CD4-positive, alpha-beta T cell (primary cell): ENCODE measurements at regions of chr15 and their contacts with region 1.

Region 1: DNA sequence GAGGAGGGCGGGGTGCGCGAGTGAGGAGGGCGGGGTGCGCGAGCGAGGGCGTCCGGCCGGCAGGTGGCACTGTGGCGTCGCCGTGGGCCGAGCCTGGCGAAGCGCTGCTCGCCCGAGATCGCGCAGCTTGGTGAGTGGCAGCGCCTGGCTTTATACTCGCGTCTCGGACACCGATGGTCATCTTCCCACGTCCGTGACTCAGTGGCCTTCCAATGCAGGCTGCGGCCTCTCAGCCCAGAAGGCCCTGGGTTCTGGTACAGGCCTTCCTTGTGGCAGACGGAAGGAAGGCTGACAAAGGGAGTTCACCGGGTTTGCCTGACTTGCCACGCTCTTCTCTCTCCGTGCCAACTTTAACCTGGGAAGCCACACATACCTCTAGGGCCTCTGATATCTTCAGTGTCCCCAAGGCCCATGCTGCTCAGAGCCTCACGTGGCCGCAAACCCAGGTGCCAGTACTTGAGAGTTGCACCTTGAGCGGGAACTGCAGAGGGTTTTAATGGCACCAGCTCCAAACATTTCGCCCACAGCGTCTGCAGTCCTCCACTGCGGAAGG is 195.3 kb upstream of the LYSMD4 start:
- DNase-seq: peak; percentile 76 to 95 (median 88)
- ATAC-seq: peak; percentile 85
- H3K4me3 ChIP-seq: peak overlapping the region; percentile 75
- H3K4me3 Mint-ChIP-seq: peak overlapping the region; percentile 93
- H3K27ac ChIP-seq: peak overlapping the region; percentile 56 to 58
- H3K27ac Mint-ChIP-seq: peak overlapping the region; percentile 89
- H3K4me1 ChIP-seq: peaks cover 21% of the 10 kb centered on the region
- H3K4me1 Mint-ChIP-seq: peaks cover 24% of the 10 kb centered on the region
- H3K27me3 ChIP-seq: no peaks in the 10 kb centered on the region
- H3K27me3 Mint-ChIP-seq: peaks cover 5% of the 10 kb centered on the region
- CTCF ChIP-seq: peak; percentile 65

Region 2: GRCh38 chr15:98658831-98659699 is 1269.4 kb before region 1 on chr15:
- CTCF ChIA-PET with region 1: no interaction called
- POLR2A ChIA-PET with region 1: no interaction called
- intact Hi-C with region 1: loop called in 1 of 2 experiments (anchors 10 kb)
- DNase-seq: peak in 7 of 14 experiments; percentile 10 to 73 (median 52)
- ATAC-seq: peak; percentile 81
- H3K4me3 ChIP-seq: no peak overlapping the region
- H3K4me3 Mint-ChIP-seq: no peak overlapping the region
- H3K27ac ChIP-seq: no peak overlapping the region
- H3K27ac Mint-ChIP-seq: no peak overlapping the region
- H3K4me1 ChIP-seq: peaks cover 9% of the 10 kb centered on the region
- H3K4me1 Mint-ChIP-seq: peaks cover 56% of the 10 kb centered on the region
- H3K27me3 ChIP-seq: no peaks in the 10 kb centered on the region
- H3K27me3 Mint-ChIP-seq: no peaks in the 10 kb centered on the region
- CTCF ChIP-seq: peak; percentile 95

Region 3: GRCh38 chr15:99961011-99961441 is 32.5 kb after region 1 on chr15:
- CTCF ChIA-PET with region 1: no interaction called
- POLR2A ChIA-PET with region 1: no interaction called
- intact Hi-C with region 1: no loop called
- DNase-seq: peak in 2 of 14 experiments; percentile 9 to 17
- ATAC-seq: no peak
- H3K4me3 ChIP-seq: no peak overlapping the region
- H3K4me3 Mint-ChIP-seq: no peak overlapping the region
- H3K27ac ChIP-seq: no peak overlapping the region
- H3K27ac Mint-ChIP-seq: no peak overlapping the region
- H3K4me1 ChIP-seq: peaks cover 5% of the 10 kb centered on the region
- H3K4me1 Mint-ChIP-seq: peaks cover 11% of the 10 kb centered on the region
- H3K27me3 ChIP-seq: no peaks in the 10 kb centered on the region
- H3K27me3 Mint-ChIP-seq: peaks cover 13% of the 10 kb centered on the region
- CTCF ChIP-seq: no peak

Region 4: GRCh38 chr15:99994849-99995248 is 66.3 kb after region 1 on chr15:
- CTCF ChIA-PET with region 1: no interaction called
- POLR2A ChIA-PET with region 1: no interaction called
- intact Hi-C with region 1: no loop called
- DNase-seq: peak in 1 of 14 experiments; percentile 12
- ATAC-seq: no peak
- H3K4me3 ChIP-seq: no peak overlapping the region
- H3K4me3 Mint-ChIP-seq: no peak overlapping the region
- H3K27ac ChIP-seq: no peak overlapping the region
- H3K27ac Mint-ChIP-seq: no peak overlapping the region
- H3K4me1 ChIP-seq: no peaks in the 10 kb centered on the region
- H3K4me1 Mint-ChIP-seq: no peaks in the 10 kb centered on the region
- H3K27me3 ChIP-seq: no peaks in the 10 kb centered on the region
- H3K27me3 Mint-ChIP-seq: no peaks in the 10 kb centered on the region
- CTCF ChIP-seq: no peak

Region 5: GRCh38 chr15:100131321-100132224 is 203.1 kb after region 1 on chr15:
- CTCF ChIA-PET with region 1: interaction called, 5 read pairs
- POLR2A ChIA-PET with region 1: no interaction called
- intact Hi-C with region 1: loop called in 1 of 2 experiments (anchors 5 kb)
- DNase-seq: peak in 7 of 14 experiments; percentile 3 to 43 (median 9)
- ATAC-seq: no peak
- H3K4me3 ChIP-seq: peak overlapping the region; percentile 19
- H3K4me3 Mint-ChIP-seq: peak overlapping the region; percentile 51
- H3K27ac ChIP-seq: no peak overlapping the region
- H3K27ac Mint-ChIP-seq: no peak overlapping the region
- H3K4me1 ChIP-seq: no peaks in the 10 kb centered on the region
- H3K4me1 Mint-ChIP-seq: no peaks in the 10 kb centered on the region
- H3K27me3 ChIP-seq: no peaks in the 10 kb centered on the region
- H3K27me3 Mint-ChIP-seq: no peaks in the 10 kb centered on the region
- CTCF ChIP-seq: peak; percentile 27

Region 6: GRCh38 chr15:100572362-100572983 is 644.0 kb after region 1 on chr15:
- CTCF ChIA-PET with region 1: interaction called, 7 read pairs
- POLR2A ChIA-PET with region 1: no interaction called
- intact Hi-C with region 1: loop called (anchors 2 to 5 kb)
- DNase-seq: peak in 3 of 14 experiments; percentile 41 to 58 (median 53)
- ATAC-seq: peak; percentile 68
- H3K4me3 ChIP-seq: peak overlapping the region; percentile 12
- H3K4me3 Mint-ChIP-seq: peak overlapping the region; percentile 22
- H3K27ac ChIP-seq: peak overlapping the region in 1 of 2 donors; percentile 18
- H3K27ac Mint-ChIP-seq: peak overlapping the region; percentile 74
- H3K4me1 ChIP-seq: peaks cover 19% of the 10 kb centered on the region
- H3K4me1 Mint-ChIP-seq: peaks cover 62% of the 10 kb centered on the region
- H3K27me3 ChIP-seq: no peaks in the 10 kb centered on the region
- H3K27me3 Mint-ChIP-seq: no peaks in the 10 kb centered on the region
- CTCF ChIP-seq: peak; percentile 77

Region 7: DNA sequence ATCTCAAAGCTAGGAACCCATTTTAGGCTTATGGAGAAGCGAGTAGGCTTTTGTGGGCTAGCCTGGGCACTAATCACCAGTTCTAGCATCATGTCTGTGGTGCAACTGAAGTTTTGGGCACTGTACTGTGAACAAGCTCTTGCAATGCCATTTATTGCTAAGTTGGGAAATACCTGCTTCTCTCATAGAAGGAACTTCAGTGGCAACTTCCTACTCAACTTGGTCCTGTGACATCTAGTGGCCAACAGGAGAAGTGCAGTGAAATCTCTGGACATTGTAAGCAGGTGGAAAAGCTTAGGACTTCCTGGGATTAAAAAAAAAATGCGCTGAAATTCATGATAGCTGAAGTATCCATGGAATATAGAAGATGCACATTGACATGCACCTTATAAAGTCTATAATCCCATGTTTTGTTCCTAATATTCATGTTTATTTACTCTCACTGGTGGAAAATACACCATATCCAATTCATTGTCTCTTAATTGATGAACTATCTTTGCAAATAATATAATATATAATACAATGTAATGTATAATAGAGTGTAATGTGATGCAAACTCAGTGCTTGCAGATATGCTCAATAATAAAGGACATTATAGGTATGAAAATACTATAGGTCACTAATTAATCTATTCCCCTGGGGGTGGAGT is 944.6 kb after region 1 on chr15:
- CTCF ChIA-PET with region 1: no interaction called
- POLR2A ChIA-PET with region 1: no interaction called
- intact Hi-C with region 1: loop called in 1 of 2 experiments (anchors 2 kb)
- DNase-seq: peak in 13 of 14 experiments; percentile 7 to 77 (median 35)
- ATAC-seq: peak; percentile 57
- H3K4me3 ChIP-seq: no peak overlapping the region
- H3K4me3 Mint-ChIP-seq: no peak overlapping the region
- H3K27ac ChIP-seq: no peak overlapping the region
- H3K27ac Mint-ChIP-seq: no peak overlapping the region
- H3K4me1 ChIP-seq: no peaks in the 10 kb centered on the region
- H3K4me1 Mint-ChIP-seq: no peaks in the 10 kb centered on the region
- H3K27me3 ChIP-seq: peaks cover 13 to 15% of the 10 kb centered on the region in 2 experiments
- H3K27me3 Mint-ChIP-seq: peaks cover 36% of the 10 kb centered on the region
- CTCF ChIP-seq: peak; percentile 94

Region 8: DNA sequence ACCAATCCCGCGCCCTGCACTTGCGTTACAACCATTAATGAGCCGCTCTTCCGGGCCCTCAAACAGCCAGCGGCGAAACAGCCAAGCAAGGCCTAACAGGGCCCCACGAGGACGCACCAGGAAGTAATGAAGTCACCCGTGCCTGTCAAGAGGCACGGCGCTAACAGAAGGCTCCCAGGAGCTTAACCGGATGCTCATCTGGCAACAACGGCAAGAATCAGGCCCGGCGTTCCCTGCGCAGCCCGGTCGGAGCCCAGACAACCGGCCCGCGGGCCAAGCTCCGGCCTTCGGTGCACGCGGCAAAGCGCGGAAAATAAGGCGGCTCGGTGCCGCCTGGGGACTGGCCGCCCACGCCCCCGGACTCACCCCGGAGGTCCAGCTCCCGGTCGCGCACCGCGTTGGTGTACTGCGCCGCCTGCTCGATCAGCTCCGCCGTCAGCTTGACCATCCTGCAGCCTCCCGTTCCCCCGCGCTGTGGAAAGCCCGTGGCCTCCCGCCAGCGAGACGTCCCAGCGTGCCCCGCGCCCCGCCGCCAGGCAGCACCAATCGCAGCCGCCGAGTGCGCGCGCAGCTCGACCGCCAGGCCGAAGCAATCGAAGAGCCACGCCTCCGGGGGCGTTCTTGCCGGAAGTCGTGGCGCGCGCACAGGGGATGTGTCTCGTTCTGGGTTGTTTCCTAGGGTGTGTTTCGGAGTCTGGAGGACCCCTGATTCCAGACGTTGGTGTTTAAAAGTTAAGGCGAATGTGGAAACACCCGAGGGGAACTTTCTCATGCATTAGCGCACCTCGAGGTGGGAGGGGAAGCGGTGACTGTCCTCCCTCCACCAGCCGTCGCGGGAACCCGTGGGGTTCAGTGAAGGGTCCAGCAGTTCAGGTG is 1366.5 kb after region 1 on chr15 and contains the start of gene SNRPA1:
- CTCF ChIA-PET with region 1: no interaction called
- POLR2A ChIA-PET with region 1: no interaction called
- intact Hi-C with region 1: loop called in 1 of 2 experiments (anchors 10 kb)
- DNase-seq: peak; percentile 94 to 99 (median 97)
- ATAC-seq: peak; percentile 80
- H3K4me3 ChIP-seq: peak within 1 kb of the TSS; percentile 90
- H3K4me3 Mint-ChIP-seq: peak within 1 kb of the TSS; percentile 100
- H3K27ac ChIP-seq: peak within 1 kb of the TSS; percentile 95 to 98
- H3K27ac Mint-ChIP-seq: peak within 1 kb of the TSS; percentile 98
- H3K4me1 ChIP-seq: peaks cover 35% of the 10 kb centered on the region
- H3K4me1 Mint-ChIP-seq: peaks cover 60% of the 10 kb centered on the region
- H3K27me3 ChIP-seq: no peaks in the 10 kb centered on the region
- H3K27me3 Mint-ChIP-seq: no peaks in the 10 kb centered on the region
- CTCF ChIP-seq: no peak
- total RNA-seq, gene SNRPA1: 214 to 222 TPM